PC-9 (cell line): ENCODE measurements at regions of chr14 and their contacts with region 1.

Region 1: GRCh38 chr14:53842938-53843337 is 113.7 kb downstream of the BMP4 start:
- DNase-seq: peak; percentile 73 to 90
- H3K4me3 ChIP-seq: no peak overlapping the region
- H3K27ac ChIP-seq: peak overlapping the region; percentile 45
- H3K4me1 ChIP-seq: peaks cover 56% of the 10 kb centered on the region
- H3K27me3 ChIP-seq: no peaks in the 10 kb centered on the region
- CTCF ChIP-seq: no peak

Region 2: DNA sequence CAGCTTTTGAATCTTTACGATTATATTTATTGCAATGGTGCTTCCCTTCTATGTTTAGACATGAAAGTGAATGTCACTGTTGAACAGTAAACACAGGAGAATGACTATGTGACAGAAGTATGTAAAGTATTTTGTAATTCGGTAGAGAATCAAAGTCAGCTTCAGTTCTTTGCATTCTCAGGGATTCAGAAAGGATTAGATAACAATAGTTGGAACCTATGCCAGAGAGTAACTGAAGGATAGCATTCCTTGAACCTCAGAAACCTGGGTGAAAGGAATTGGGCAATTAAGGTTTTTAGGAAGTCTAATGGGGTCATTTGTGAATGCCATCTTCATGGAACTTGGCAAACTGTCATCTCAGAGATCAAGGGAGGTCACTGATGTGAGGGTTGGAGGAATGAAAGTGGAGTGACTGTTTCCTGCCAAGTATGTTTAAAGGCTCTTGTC is 384.5 kb before region 1 on chr14:
- CTCF ChIA-PET with region 1: no interaction called
- POLR2A ChIA-PET with region 1: no interaction called
- intact Hi-C with region 1: loop called (anchors 1 kb)
- DNase-seq: peak; percentile 54 to 91
- H3K4me3 ChIP-seq: no peak overlapping the region
- H3K27ac ChIP-seq: peak overlapping the region; percentile 43
- H3K4me1 ChIP-seq: peaks cover 18% of the 10 kb centered on the region
- H3K27me3 ChIP-seq: no peaks in the 10 kb centered on the region
- CTCF ChIP-seq: no peak

Region 3: DNA sequence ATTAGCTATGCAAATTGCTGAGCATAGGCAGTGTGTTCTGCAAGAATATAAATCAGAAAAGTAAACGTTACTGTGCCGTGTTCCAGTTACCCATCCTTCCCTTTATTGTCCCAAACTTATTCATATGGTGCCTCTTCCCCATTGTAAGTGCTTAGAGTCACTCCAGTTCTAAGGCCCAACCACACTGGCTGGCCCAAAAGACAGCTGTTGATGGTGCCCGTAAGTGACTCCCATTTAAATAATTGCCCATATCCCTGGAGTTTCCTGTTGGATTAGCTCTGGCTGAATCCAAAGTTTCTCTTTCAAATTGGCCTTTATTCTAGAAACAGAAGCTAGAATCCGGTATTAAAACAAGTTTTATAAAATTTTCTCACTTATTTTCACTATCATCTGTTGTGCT is 289.7 kb before region 1 on chr14:
- CTCF ChIA-PET with region 1: no interaction called
- POLR2A ChIA-PET with region 1: no interaction called
- intact Hi-C with region 1: no loop called
- DNase-seq: no peak
- H3K4me3 ChIP-seq: no peak overlapping the region
- H3K27ac ChIP-seq: no peak overlapping the region
- H3K4me1 ChIP-seq: no peaks in the 10 kb centered on the region
- H3K27me3 ChIP-seq: no peaks in the 10 kb centered on the region
- CTCF ChIP-seq: no peak

Region 4: GRCh38 chr14:53715193-53715721 is 127.7 kb before region 1 on chr14:
- CTCF ChIA-PET with region 1: no interaction called
- POLR2A ChIA-PET with region 1: interaction called, 3 read pairs
- intact Hi-C with region 1: loop called (anchors 5 kb)
- DNase-seq: peak; percentile 27 to 68
- H3K4me3 ChIP-seq: peak overlapping the region; percentile 3; the same call in 1 of the 2 replicates
- H3K27ac ChIP-seq: no peak overlapping the region
- H3K4me1 ChIP-seq: peaks cover 9% of the 10 kb centered on the region
- H3K27me3 ChIP-seq: no peaks in the 10 kb centered on the region
- CTCF ChIP-seq: no peak

Region 5: GRCh38 chr14:53793790-53794505 is 49.0 kb before region 1 on chr14:
- CTCF ChIA-PET with region 1: no interaction called
- POLR2A ChIA-PET with region 1: no interaction called
- intact Hi-C with region 1: loop called (anchors 5 kb)
- DNase-seq: no peak
- H3K4me3 ChIP-seq: no peak overlapping the region
- H3K27ac ChIP-seq: no peak overlapping the region
- H3K4me1 ChIP-seq: no peaks in the 10 kb centered on the region; the same call in 1 of the 2 replicates
- H3K27me3 ChIP-seq: no peaks in the 10 kb centered on the region
- CTCF ChIP-seq: no peak

Region 6: DNA sequence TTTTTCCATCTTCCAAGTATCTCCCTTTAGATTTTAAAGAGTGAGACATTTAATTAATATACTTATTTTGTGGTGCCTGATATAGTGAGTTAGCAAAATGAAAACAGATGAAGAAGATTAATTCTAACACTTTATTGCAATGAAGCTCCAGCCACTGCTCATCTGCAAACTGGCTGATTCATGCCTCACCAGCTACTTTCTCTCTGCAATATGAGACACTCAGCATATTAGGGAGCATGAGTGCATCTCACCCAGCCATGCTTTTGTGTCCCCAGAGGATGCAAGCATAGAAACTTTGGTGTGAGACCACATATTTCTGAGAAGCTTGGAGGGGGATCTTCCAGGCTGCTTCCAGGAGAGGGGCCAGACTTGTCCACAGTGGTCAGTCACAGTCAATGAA is 34.9 kb before region 1 on chr14:
- CTCF ChIA-PET with region 1: no interaction called
- POLR2A ChIA-PET with region 1: interaction called, 10 read pairs
- intact Hi-C with region 1: no loop called
- DNase-seq: no peak
- H3K4me3 ChIP-seq: no peak overlapping the region
- H3K27ac ChIP-seq: no peak overlapping the region
- H3K4me1 ChIP-seq: no peaks in the 10 kb centered on the region
- H3K27me3 ChIP-seq: no peaks in the 10 kb centered on the region
- CTCF ChIP-seq: no peak

Region 7: GRCh38 chr14:53824061-53824460 is 18.9 kb before region 1 on chr14:
- CTCF ChIA-PET with region 1: no interaction called
- POLR2A ChIA-PET with region 1: no interaction called
- intact Hi-C with region 1: no loop called
- DNase-seq: no peak
- H3K4me3 ChIP-seq: no peak overlapping the region
- H3K27ac ChIP-seq: no peak overlapping the region
- H3K4me1 ChIP-seq: no peaks in the 10 kb centered on the region
- H3K27me3 ChIP-seq: no peaks in the 10 kb centered on the region
- CTCF ChIP-seq: no peak

Region 8: DNA sequence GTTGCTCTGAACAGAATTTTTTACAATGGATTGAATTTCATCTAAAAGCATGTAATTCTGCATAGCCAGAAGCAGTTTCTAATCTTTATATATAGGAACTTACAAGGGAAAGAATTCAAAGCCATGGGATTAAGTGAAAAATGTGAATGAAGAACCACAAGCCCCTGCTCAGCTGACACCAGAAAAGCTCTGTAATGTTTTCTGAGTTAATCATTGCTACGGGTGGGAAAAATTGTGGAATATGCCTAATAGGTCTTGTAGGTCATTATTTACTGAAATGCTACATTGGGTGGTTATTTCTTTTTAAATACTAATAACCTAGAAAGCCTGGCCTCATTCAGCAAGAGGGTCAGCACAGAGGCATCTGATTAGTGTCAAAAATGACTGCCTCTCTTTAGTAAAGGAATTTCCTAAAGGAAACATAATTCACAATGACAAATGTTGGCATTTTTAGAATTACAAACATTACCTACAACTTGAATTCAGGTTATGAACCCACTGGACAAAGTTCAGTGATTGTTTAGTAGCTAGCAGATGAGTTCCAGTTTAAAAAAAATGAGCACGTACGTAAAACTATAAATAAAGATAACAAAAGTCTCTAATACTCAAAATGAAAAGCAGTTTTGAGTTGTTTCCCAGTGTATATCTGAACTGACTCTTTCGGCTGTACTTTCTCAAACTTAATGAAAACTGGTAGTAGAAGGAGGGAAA is 38.4 kb after region 1 on chr14:
- CTCF ChIA-PET with region 1: no interaction called
- POLR2A ChIA-PET with region 1: no interaction called
- intact Hi-C with region 1: no loop called
- DNase-seq: no peak
- H3K4me3 ChIP-seq: no peak overlapping the region
- H3K27ac ChIP-seq: no peak overlapping the region
- H3K4me1 ChIP-seq: no peaks in the 10 kb centered on the region
- H3K27me3 ChIP-seq: no peaks in the 10 kb centered on the region
- CTCF ChIP-seq: no peak

Region 9: GRCh38 chr14:54338696-54339317 is 495.9 kb after region 1 on chr14:
- CTCF ChIA-PET with region 1: no interaction called
- POLR2A ChIA-PET with region 1: no interaction called
- intact Hi-C with region 1: loop called (anchors 5 kb)
- DNase-seq: peak; percentile 39 to 57
- H3K4me3 ChIP-seq: no peak overlapping the region
- H3K27ac ChIP-seq: no peak overlapping the region
- H3K4me1 ChIP-seq: peaks cover 13% of the 10 kb centered on the region
- H3K27me3 ChIP-seq: no peaks in the 10 kb centered on the region
- CTCF ChIP-seq: peak; percentile 73